GM12878 (cell line): ENCODE measurements at regions of chr6 and their contacts with region 1.

Region 1: GRCh38 chr6:43774776-43775534 is 4.9 kb downstream of the VEGFA start:
- DNase-seq: no peak
- ATAC-seq: peak; percentile 22
- H3K4me3 ChIP-seq: peak overlapping the region; percentile 98
- H3K27ac ChIP-seq: no peak overlapping the region
- H3K4me1 ChIP-seq: peaks cover 22% of the 10 kb centered on the region
- H3K27me3 ChIP-seq: no peaks in the 10 kb centered on the region
- CTCF ChIP-seq: peak; percentile 81 to 96 (median 87)
- EP300 ChIP-seq: no peak
- POLR2A ChIP-seq: no peak
- RAD21 ChIP-seq: peak; percentile 53

Region 2: DNA sequence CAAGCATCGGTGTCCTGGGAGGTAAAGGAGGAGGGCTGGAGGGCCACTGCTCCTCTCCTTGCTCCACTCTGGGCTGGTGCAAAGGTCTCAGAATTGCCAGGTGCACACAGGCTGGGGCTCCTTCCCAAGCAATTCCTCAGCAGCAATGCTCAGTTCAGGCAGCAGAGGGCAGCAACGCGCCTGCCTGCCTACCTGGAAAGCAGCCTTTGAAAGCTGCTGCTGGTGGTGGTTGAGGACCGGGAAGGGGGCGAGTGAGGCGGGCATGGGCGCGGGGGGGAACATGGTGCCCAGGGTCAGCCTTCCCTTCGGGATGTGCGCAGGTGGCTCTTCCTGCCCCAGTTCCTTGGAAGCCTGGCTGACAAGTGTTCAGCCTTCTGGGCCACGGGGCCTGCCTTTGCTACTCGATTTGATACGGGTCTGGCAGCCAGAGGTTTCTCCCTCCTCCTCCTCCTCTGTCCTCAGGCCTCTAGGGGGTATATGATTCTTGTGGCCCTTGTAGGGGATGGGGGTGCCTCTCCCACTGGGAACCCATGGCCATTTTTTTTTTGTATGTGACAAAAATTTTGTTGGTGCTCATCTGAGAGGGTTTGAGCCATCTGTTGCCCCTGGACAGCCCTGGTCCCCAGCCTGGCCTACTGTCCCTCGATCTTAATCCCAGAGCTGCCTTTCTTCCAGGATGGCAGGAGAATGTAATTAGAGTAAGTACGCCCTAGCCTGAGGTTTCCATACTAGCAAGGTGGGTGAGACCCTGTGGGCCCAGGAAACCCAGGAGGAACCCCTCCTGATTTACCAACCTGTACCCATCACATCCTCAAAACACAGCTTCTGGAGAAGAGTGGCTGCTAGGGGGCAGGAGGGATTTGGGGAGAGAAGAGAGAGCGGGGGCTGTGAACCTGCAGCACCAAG is 107.5 kb before region 1 on chr6:
- CTCF ChIA-PET with region 1: interaction called, 50 read pairs
- POLR2A ChIA-PET with region 1: no interaction called
- RAD21 ChIA-PET with region 1: interaction called, 18 read pairs
- SMC1A ChIA-PET with region 1: interaction called, 12 read pairs
- in situ Hi-C with region 1: no loop called
- intact Hi-C with region 1: loop called (anchors 1 kb)
- DNase-seq: no peak
- ATAC-seq: peak; percentile 84
- H3K4me3 ChIP-seq: no peak overlapping the region
- H3K27ac ChIP-seq: peak overlapping the region; percentile 69
- H3K4me1 ChIP-seq: peaks cover 38% of the 10 kb centered on the region
- H3K27me3 ChIP-seq: no peaks in the 10 kb centered on the region
- CTCF ChIP-seq: peak; percentile 95 to 99 (median 95)
- EP300 ChIP-seq: no peak
- POLR2A ChIP-seq: peak; percentile 70
- RAD21 ChIP-seq: peak; percentile 92

Region 3: GRCh38 chr6:43758617-43759050 is 16.3 kb before region 1 on chr6:
- CTCF ChIA-PET with region 1: interaction called, 17 read pairs
- POLR2A ChIA-PET with region 1: interaction called, 3 read pairs
- RAD21 ChIA-PET with region 1: interaction called, 6 read pairs
- SMC1A ChIA-PET with region 1: no interaction called
- in situ Hi-C with region 1: no loop called
- intact Hi-C with region 1: no loop called
- DNase-seq: no peak
- ATAC-seq: peak; percentile 85
- H3K4me3 ChIP-seq: no peak overlapping the region
- H3K27ac ChIP-seq: no peak overlapping the region
- H3K4me1 ChIP-seq: peaks cover 10% of the 10 kb centered on the region
- H3K27me3 ChIP-seq: no peaks in the 10 kb centered on the region
- CTCF ChIP-seq: peak; percentile 67 to 88 (median 84)
- EP300 ChIP-seq: no peak
- POLR2A ChIP-seq: no peak
- RAD21 ChIP-seq: peak; percentile 62

Region 4: DNA sequence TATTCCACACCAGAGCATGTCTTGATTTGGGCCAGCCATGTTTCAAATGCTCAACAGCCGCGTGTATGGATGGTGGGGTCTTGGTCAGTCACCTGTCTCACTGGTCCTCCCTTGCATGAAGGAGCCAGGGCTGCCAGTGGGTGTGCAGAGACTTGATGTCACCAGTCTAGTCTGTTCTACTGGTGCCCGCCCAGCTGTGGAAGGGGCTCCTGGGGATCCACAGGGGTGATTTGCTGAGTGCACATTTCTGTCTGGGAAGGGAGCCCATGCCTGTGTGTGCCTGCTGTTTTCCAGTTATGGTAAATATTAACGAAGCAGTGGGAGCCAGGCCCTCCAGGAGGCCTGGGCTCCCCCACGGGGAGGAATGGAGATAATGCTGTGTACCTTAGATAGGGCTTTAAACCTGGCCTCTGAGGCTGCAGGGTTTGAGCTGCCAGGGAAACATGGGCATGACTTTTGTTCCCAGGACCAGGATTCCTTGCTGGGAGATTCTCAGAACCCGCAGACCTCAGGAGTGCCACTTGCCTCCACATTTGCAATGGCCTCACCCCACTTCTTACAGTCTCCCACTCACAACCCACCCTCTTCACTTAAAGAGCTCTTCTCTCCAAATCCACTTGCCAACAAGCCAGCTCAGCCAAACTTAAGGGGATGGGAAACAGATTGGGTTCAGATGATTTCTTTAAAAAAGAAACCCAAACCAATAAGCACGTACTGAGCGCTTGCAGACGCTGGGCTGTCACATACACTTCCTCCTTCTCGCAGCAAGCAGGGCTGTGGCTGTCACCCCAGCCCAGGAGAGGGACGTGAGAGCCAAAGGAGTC is 49.1 kb after region 1 on chr6:
- CTCF ChIA-PET with region 1: interaction called, 52 read pairs
- POLR2A ChIA-PET with region 1: interaction called, 7 read pairs
- RAD21 ChIA-PET with region 1: interaction called, 13 read pairs
- SMC1A ChIA-PET with region 1: interaction called, 4 read pairs
- in situ Hi-C with region 1: no loop called
- intact Hi-C with region 1: no loop called
- DNase-seq: no peak
- ATAC-seq: peak; percentile 72
- H3K4me3 ChIP-seq: no peak overlapping the region
- H3K27ac ChIP-seq: no peak overlapping the region
- H3K4me1 ChIP-seq: no peaks in the 10 kb centered on the region
- H3K27me3 ChIP-seq: no peaks in the 10 kb centered on the region; a peak in 2 of 4 replicates
- CTCF ChIP-seq: no peak
- EP300 ChIP-seq: no peak
- POLR2A ChIP-seq: no peak
- RAD21 ChIP-seq: no peak

Region 5: GRCh38 chr6:43838276-43839036 is 63.5 kb after region 1 on chr6:
- CTCF ChIA-PET with region 1: interaction called, 22 read pairs
- POLR2A ChIA-PET with region 1: interaction called, 4 read pairs
- RAD21 ChIA-PET with region 1: interaction called, 14 read pairs
- SMC1A ChIA-PET with region 1: interaction called, 14 read pairs
- in situ Hi-C with region 1: no loop called
- intact Hi-C with region 1: no loop called
- DNase-seq: no peak
- ATAC-seq: peak; percentile 86
- H3K4me3 ChIP-seq: no peak overlapping the region
- H3K27ac ChIP-seq: no peak overlapping the region
- H3K4me1 ChIP-seq: no peaks in the 10 kb centered on the region
- H3K27me3 ChIP-seq: no peaks in the 10 kb centered on the region; a peak in 1 of 4 replicates
- CTCF ChIP-seq: peak; percentile 52 to 63 (median 60)
- EP300 ChIP-seq: no peak
- POLR2A ChIP-seq: no peak
- RAD21 ChIP-seq: peak; percentile 54

Region 6: GRCh38 chr6:43977404-43978111 is 202.6 kb after region 1 on chr6:
- CTCF ChIA-PET with region 1: interaction called, 28 read pairs
- POLR2A ChIA-PET with region 1: interaction called, 4 read pairs
- RAD21 ChIA-PET with region 1: interaction called, 3 read pairs
- SMC1A ChIA-PET with region 1: no interaction called
- in situ Hi-C with region 1: no loop called
- intact Hi-C with region 1: no loop called
- DNase-seq: peak; percentile 91
- ATAC-seq: peak; percentile 95
- H3K4me3 ChIP-seq: no peak overlapping the region
- H3K27ac ChIP-seq: peak overlapping the region; percentile 45
- H3K4me1 ChIP-seq: peaks cover 18% of the 10 kb centered on the region
- H3K27me3 ChIP-seq: no peaks in the 10 kb centered on the region
- CTCF ChIP-seq: peak; percentile 26 to 50 (median 50); a peak in 5 of 6 replicates
- EP300 ChIP-seq: peak; percentile 89 to 94
- POLR2A ChIP-seq: no peak
- RAD21 ChIP-seq: peak; percentile 44

Region 7: DNA sequence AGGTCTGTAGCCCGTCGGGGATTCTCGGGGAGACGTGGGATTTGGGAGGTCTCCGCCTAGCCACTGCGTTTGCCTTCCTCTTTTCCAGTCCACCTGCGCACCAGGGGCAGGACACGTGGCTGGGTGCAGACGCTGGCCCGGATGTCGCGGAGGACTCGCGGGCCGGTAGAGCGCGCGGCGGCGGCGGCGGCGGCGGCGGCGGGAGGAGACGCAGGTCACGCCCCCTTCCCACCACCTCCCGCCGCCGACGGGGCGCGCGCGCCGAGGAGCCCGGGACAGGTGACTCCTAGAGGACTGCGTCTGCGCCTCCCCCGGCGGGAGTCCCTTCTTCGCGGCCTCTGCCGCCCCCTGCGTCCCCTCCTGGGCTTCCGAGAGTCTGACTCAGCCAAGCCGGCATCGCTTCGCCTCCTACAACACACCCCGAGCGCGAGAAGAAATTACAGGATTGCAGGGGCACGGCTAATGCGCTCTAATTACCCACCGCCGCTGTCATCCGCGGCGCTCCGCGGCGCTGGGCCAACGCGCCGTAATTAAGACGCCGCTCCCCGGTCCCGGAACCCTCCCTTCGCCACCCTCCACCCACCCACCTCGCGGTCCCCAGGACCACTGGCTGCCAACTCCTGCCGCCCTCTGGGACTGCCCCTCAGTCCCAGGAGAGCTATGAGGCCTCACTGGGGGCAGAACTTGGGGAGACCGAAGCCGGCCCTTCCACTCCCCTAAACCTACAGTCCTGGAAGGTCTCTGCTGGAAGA is 227.8 kb after region 1 on chr6:
- CTCF ChIA-PET with region 1: interaction called, 70 read pairs
- POLR2A ChIA-PET with region 1: interaction called, 42 read pairs
- RAD21 ChIA-PET with region 1: interaction called, 54 read pairs
- SMC1A ChIA-PET with region 1: interaction called, 33 read pairs
- in situ Hi-C with region 1: loop called (anchors 5 kb)
- intact Hi-C with region 1: loop called (anchors 1 kb)
- DNase-seq: no peak
- ATAC-seq: peak; percentile 28
- H3K4me3 ChIP-seq: peak overlapping the region; percentile 49
- H3K27ac ChIP-seq: no peak overlapping the region; the same call in 1 of the 2 replicates
- H3K4me1 ChIP-seq: peaks cover 20% of the 10 kb centered on the region
- H3K27me3 ChIP-seq: peaks cover 0 to 4% of the 10 kb centered on the region in 2 experiments; a peak in 2 of 4 replicates
- CTCF ChIP-seq: peak in 2 of 3 experiments; percentile 4 to 53; a peak in 3 of 6 replicates
- EP300 ChIP-seq: no peak; a peak in 1 of 4 replicates
- POLR2A ChIP-seq: no peak
- RAD21 ChIP-seq: 0 out of 2 replicates have a peak, but pooled peaks have one; percentile 8